Calu3 (cell line): ENCODE measurements at regions of chr10 and their contacts with region 1.

Region 1: DNA sequence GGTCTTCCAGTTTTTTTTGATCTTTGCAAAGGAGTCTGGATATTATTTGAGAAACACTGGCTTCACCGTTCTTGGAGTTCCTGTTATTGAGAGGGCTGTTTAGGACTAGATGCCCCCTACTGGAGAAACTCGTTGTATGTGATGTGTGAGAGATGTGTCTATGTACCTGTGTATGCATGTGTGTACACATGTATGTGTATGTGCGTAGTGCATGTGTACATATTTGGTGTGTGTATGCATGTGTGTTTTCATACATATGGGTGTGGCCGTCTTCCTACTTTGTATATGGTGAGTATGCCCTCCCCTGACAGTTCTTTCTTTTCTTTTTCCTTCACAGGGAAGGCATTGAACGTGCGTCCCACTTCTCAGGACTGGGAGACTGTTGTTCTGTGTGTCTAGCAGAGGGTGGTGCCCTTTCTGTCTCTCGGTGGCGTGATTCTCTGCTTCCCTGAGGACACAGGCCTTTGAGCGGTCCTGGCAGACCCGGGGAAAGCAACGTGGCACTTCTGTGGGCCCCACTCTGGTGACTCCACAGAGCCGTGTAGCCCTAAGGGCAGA is 3.0 kb upstream of the CALHM3 start:
- DNase-seq: peak; percentile 36
- H3K4me3 Mint-ChIP-seq: no peak overlapping the region
- H3K27ac Mint-ChIP-seq: no peak overlapping the region
- H3K4me1 Mint-ChIP-seq: peaks cover 10% of the 10 kb centered on the region
- H3K27me3 Mint-ChIP-seq: no peaks in the 10 kb centered on the region
- CTCF ChIP-seq: peak; percentile 51

Region 2: DNA sequence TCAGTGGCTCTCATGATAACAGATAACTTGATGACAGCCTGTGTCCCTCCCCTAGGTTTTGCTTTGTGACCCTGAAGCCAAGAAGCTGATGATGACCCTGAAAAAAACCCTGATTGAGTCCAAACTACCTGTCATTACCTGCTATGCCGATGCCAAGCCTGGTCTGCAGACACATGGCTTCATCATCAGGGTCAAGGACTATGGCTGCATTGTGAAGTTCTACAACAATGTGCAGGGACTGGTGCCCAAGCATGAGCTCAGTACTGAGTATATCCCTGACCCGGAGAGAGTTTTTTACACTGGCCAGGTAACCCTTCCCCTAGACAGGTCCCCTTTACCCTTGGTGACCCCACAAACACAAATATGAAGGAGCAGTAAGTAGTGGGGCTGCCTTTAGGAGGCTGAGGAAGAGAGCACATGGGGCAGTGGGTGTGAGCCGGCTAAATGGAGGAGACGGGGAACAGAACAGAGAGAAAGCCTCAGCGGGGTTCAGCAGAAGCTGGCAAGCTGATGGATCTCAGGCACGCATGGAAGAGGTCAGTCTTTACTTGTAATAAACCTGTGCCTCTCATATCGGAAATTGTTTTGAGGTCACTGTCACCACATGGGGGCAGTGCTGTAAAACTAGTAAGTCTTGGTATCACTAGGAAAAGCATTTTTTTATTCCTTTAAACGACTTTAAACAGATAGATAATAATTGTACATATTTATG is 65.5 kb before region 1 on chr10:
- CTCF ChIA-PET with region 1: no interaction called
- intact Hi-C with region 1: loop called (anchors 1 kb)
- DNase-seq: peak; percentile 43
- H3K4me3 Mint-ChIP-seq: no peak overlapping the region
- H3K27ac Mint-ChIP-seq: no peak overlapping the region
- H3K4me1 Mint-ChIP-seq: no peaks in the 10 kb centered on the region
- H3K27me3 Mint-ChIP-seq: no peaks in the 10 kb centered on the region
- CTCF ChIP-seq: peak; percentile 22

Region 3: DNA sequence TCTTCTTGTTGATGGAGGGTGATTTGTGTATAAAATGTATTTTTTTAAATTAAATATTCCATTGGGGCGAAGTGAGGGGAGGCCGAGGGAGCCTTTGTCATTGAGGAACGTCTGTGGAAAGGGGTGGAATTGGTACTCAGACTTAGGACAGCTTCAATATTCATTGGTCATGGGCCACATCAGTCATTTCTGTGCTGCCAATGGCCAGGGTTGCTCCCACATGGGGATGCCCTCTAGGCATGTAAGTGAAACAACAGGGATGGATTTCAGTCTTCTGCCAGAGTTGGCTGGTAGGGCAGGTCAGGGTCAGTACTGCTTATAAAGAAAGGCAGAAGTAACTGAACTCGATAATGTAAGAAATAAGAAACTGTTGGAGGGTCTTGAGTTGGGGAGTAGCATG is 58.7 kb after region 1 on chr10:
- CTCF ChIA-PET with region 1: no interaction called
- intact Hi-C with region 1: no loop called
- DNase-seq: no peak
- H3K4me3 Mint-ChIP-seq: no peak overlapping the region
- H3K27ac Mint-ChIP-seq: no peak overlapping the region
- H3K4me1 Mint-ChIP-seq: no peaks in the 10 kb centered on the region
- H3K27me3 Mint-ChIP-seq: peaks cover 36% of the 10 kb centered on the region
- CTCF ChIP-seq: no peak